Posterior vena cava (tissue), 2 donors: ENCODE measurements at regions of chr14 and their contacts with region 1.

Region 1: GRCh38 chr14:104650057-104650981 is 39.1 kb upstream of the INF2 start:
- DNase-seq: peak; percentile 87

Region 2: DNA sequence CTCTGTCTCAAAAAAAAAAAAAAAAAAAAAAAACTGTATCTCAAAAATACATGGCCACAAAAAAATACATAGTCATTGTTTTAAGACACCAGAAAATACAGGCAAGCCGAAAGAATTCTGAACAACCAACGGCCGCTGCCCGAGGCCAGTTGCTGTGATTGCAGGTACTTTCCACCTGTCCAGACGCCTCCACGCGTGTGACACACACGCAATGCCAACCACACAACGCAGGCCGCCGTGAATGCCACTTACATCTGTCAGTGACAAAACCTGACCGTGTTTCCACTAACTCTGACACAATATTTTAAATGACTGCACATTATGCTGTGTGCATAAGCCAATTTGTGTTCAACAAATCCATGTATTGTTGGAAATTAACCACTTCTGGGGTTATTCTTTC is 16.7 kb after region 1 on chr14:
- intact Hi-C with region 1: no loop called
- DNase-seq: peak; percentile 61

Region 3: DNA sequence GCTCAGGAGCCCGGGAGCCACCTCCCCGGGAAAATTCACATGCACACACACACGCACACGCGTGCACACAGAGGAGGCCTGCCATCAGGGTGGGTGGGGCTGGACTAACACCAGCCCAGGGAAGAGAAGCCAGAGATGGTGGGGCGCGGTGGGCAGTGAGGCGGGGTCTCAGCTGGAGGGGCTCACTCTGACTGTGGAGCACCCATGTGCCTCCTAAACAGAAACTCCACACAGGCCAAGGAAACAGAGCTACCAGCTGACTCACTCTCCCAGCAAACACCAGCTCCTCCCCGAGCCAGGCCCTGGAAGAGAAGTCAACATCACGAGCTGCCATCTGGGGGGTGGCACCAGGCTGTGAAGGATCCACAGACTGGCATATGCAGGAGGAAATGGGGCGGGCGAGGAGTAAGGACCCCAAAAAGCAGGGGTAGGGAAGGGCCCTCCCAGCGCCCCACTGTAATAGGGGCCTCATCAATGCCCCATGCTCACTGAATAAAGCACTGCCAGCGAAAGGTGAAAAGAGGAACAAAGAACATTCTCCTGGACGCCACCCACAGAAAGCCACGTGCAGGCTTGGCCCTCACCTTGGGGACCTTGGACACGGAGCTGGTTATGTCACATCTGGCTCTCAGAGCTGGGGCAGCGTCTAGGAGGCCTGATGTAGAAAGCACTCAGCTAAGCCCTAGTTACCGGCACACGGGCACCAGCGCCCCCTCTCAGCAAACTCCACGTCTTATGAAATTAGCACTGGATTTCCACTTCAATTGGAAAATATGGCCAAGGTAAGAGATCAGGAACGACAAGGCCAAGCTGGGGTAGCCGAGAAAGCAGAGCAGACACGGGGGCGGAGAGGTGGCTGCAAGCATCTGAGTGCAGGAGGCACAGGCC is 30.7 kb after region 1 on chr14:
- intact Hi-C with region 1: no loop called
- DNase-seq: no peak

Region 4: DNA sequence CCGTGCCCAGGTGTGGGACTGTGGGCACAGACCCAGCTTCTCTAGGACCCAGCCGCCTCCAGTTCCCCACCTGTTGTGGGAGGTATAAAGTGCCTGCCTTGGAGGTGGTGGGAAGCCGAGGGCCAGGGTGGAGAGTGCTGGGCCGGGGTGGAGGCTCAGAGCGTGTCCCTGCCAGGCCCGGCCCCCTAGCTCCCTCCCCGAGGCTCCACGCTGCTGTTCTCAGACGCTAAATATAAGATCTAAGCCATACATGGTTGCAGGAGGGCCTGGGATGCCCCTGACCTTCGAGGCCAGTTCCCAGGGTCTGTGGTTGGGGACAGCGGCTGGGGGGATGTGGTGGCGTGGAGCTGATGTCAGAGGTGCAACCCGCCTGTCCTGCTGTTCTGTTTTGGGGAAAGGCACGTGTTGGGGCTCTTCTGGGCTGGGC is 49.9 kb after region 1 on chr14:
- intact Hi-C with region 1: loop called in 1 of 2 experiments (anchors 2 kb)
- DNase-seq: no peak

Region 5: DNA sequence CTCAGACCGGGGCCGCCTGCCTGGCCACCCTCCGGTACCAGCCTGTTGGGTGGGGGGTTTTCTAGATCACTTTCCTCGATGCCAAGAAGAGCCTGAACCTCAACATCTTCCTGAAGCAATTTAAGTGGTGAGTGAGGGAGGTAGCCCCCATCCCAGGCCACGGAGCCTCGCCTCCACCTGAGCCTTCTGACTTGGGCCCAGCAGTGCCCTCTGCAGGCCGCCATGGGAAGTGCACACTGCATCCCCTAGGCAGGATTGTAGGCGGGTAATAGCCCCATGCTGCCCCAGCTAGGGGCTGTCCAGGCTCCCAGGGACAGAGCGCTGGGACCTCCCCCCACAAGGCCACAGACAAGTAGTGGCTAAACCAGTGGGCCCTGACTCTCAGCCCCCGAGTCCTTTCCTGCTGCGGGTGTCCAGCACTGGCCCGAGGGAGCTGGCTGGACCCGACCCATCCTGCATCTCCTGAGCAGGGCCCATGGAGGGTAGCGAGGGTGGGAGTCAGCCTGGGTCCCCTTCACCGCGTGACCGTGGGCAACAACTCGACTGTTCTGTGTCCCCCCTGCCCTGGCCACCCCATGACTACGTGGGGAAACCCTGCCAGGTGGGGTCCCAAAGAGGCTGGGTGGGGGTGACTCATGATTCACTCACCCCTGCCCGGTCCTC is 58.4 kb after region 1 on chr14:
- intact Hi-C with region 1: loop called (anchors 2 to 5 kb)
- DNase-seq: peak; percentile 90